Transverse colon (tissue), 4 donors: ENCODE measurements at regions of chr2 and their contacts with region 1.

Region 1: GRCh38 chr2:86541334-86541733 is 21.9 kb downstream of the CHMP3 start:
- DNase-seq: no peak
- H3K4me3 ChIP-seq: no peak overlapping the region
- H3K27ac ChIP-seq: no peak overlapping the region
- H3K4me1 ChIP-seq: peaks cover 0 to 5% (median 0%) of the 10 kb centered on the region in 4 donors
- H3K27me3 ChIP-seq: no peaks in the 10 kb centered on the region
- CTCF ChIP-seq: no peak
- EP300 ChIP-seq: no peak
- POLR2A ChIP-seq: no peak

Region 2: DNA sequence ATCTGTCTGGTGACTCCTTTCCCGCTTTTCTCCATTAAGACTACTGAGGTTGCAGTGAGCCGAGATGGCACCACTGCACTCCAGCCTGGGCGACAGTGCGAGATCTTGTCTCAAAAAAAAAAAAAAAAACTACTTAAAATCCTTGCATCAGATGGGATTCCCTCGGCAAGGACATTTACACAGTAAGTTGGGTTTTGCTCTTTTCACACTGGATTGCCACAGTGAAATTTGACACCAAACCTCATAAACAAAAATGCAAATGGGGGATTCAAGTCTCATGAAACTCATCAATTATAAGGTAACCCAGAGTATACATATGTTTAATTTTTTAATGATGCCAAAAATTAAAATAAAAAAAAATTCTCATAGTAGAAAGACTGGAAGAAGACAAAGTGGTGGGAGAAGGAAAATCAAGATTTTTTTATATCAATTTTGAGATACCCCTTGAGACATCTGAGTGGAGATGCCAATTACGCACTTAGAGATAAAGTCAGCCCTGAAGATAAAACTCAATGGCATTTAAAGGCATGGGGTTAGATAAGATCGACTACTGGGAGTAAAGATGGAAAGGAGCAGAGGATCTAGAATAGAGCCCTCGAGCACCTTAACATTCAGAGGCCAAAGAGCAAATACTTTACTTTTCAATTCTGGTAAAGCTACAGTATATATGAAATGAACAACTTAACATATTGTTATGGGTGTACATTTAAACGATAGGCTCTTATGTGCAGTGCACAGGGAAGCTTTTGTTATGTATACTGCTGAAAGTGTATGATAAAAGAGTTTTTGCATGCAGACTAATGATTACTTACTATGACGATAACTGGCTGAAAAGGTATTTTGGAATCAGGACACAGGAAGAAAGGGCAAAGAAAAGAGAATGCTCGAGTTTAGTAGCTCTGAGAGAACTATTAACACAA is 15.7 kb before region 1 on chr2:
- in situ Hi-C with region 1: no loop called
- intact Hi-C with region 1: loop called (anchors 1 kb)
- DNase-seq: no peak
- H3K4me3 ChIP-seq: no peak overlapping the region
- H3K27ac ChIP-seq: no peak overlapping the region
- H3K4me1 ChIP-seq: no peaks in the 10 kb centered on the region
- H3K27me3 ChIP-seq: no peaks in the 10 kb centered on the region
- CTCF ChIP-seq: no peak
- EP300 ChIP-seq: no peak
- POLR2A ChIP-seq: no peak

Region 3: DNA sequence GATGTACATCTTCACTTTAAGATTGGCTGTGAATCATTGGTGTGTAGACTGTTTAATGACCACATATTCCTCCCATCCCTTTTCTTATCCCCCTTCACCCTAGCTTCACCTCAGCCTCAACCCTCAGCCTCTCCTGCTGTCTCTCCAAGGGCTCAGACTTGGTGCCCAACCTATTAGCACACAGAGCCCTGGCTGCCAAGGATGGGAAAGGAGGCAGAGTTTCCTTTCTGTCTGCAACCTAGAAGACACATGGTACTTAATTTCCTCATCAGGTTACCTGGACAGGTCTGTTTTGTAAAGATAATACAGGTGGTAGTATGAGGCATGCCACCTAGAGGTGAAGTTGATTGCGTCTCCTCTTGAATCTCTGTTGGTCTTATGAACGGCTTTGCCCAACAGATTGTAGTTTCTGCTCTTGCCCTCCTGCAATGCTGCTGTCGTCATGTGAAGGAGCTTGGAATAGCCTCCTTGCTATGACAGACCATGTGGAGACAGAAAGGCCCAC is 134.2 kb after region 1 on chr2:
- in situ Hi-C with region 1: no loop called
- intact Hi-C with region 1: no loop called
- DNase-seq: peak; percentile 27
- H3K4me3 ChIP-seq: no peak overlapping the region
- H3K27ac ChIP-seq: peak overlapping the region in 3 of 4 donors; percentile 20 to 45 (median 44)
- H3K4me1 ChIP-seq: peaks cover 8 to 20% (median 14%) of the 10 kb centered on the region in 4 donors
- H3K27me3 ChIP-seq: no peaks in the 10 kb centered on the region
- CTCF ChIP-seq: peak; percentile 33 to 54 (median 38)
- EP300 ChIP-seq: no peak
- POLR2A ChIP-seq: no peak